PC-9 (cell line): ENCODE measurements at regions of chr6 and their contacts with region 1.

Region 1: DNA sequence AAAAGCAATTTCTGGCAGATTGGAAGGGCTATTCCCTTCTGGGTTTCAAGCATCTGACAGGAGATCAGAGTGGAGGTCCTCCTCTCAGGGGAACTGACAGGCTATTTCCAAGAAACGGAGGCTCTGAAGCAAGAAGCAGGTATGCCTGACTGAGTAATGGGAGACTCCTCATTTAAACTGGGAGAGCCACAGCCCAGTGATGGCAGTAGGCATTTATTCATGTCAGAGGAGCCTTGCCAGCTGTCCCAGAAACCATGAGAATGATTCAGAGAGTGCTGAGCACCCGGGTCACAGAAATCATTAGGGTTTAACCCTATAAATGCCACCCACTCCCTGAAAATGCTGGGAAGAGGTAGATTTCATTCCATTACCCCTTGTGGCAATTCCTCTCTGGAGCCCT is 247.5 kb upstream of the RNF217 start:
- DNase-seq: no peak
- H3K4me3 ChIP-seq: no peak overlapping the region
- H3K27ac ChIP-seq: no peak overlapping the region
- H3K4me1 ChIP-seq: no peaks in the 10 kb centered on the region
- H3K27me3 ChIP-seq: no peaks in the 10 kb centered on the region
- CTCF ChIP-seq: no peak

Region 2: DNA sequence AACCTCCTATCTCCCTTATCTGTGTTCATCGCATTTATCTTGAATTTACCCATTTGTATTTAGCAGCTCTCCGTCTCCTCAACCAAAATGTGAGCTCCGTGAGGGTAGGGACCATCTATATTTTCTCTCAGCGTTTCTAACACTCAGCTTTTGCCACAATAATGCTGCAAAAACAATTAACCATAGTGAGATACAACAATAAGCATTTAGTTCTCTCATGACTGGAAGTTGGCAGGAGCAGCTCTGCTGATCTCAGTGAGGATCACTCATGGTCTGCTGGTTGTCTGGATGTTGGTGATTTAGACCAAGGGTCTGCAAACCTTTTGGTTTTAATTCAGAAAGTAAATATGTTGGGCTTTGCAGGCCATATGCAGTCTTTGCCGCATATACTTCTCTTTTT is 147.3 kb before region 1 on chr6:
- CTCF ChIA-PET with region 1: interaction called, 16 read pairs
- POLR2A ChIA-PET with region 1: no interaction called
- intact Hi-C with region 1: no loop called
- DNase-seq: no peak
- H3K4me3 ChIP-seq: no peak overlapping the region
- H3K27ac ChIP-seq: no peak overlapping the region
- H3K4me1 ChIP-seq: no peaks in the 10 kb centered on the region
- H3K27me3 ChIP-seq: no peaks in the 10 kb centered on the region
- CTCF ChIP-seq: no peak